ENCODE measurements at regions of chr19 and their contacts with region 1.

Region 1: DNA sequence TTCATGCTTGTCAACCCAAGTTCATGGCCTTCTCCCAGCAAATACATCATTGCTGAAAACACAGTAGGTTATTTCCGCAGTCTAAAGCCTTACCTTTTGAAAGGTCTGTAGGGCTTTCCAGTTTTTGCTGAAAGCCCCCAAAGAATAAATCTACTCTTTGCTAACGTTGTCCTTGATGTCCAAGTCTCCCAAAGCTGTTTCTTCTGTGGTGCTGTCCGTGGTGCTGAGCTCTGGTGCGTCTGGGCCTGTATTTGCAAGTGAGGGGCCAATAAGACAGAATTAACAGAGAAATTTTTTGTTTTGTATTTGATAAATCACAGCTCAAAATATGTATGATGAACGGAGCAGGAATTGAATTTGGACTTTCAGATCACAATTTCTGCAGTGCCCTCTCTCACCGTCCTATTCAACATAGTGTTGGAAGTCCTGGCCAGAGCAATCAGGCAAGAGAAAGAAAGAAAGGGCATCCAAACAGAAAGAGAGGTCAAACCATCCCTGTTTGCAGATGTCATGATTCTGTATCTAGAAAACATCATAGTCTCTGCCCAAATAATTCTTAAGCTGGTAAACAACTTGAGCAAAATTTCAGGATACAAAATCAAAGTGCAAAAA is 9.8 kb upstream of the LGALS16 start:
- DNase-seq: peak; percentile 58
- H3K4me3 Mint-ChIP-seq: no peak overlapping the region
- H3K27ac Mint-ChIP-seq: no peak overlapping the region
- H3K4me1 Mint-ChIP-seq: no peaks in the 10 kb centered on the region
- H3K27me3 Mint-ChIP-seq: peaks cover 40% of the 10 kb centered on the region

Region 2: DNA sequence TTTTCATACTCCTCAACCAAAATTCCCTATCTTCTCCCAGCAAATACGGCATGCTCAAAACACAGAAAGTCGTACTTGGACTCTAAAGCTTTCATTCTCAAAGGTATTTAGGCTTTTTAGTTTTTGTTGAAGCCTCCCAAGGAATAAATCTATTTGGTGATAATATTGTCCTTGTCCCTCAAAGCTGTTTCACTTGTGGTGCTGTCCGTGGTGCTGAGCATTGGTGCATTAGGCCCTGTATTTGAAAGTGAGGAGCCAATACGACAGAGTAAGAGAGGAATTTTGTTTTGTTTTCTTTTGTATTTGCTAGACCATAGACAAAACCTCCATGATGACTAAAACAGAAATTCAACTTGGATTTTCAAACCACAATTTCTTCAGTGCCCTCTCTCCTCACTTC is 46.8 kb before region 1 on chr19:
- CTCF ChIA-PET with region 1: no interaction called
- intact Hi-C with region 1: loop called (anchors 10 kb)
- DNase-seq: peak; percentile 65
- H3K4me3 Mint-ChIP-seq: no peak overlapping the region
- H3K27ac Mint-ChIP-seq: no peak overlapping the region
- H3K4me1 Mint-ChIP-seq: no peaks in the 10 kb centered on the region
- H3K27me3 Mint-ChIP-seq: peaks cover 34% of the 10 kb centered on the region

Region 3: DNA sequence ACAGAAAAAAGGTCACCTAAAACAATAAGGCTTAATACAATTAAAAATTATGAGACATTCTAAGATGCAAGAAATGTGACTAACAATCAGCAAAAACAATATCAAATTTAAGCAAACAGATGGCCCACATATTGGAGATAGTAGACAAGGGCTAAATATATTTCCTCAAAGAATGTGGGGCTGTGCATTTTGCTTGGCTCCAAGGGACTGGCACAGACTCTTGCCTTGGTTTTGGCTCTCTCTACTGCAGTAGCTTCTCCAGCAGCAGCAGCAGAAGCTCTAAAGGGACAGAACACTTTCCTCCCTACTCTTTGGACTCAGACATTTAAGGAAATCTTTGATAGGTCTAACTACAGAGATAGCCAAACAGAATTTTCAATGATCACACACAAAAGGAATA is 483.1 kb after region 1 on chr19:
- CTCF ChIA-PET with region 1: no interaction called
- intact Hi-C with region 1: loop called (anchors 10 kb)
- DNase-seq: no peak
- H3K4me3 Mint-ChIP-seq: no peak overlapping the region
- H3K27ac Mint-ChIP-seq: no peak overlapping the region
- H3K4me1 Mint-ChIP-seq: no peaks in the 10 kb centered on the region
- H3K27me3 Mint-ChIP-seq: peaks cover 25% of the 10 kb centered on the region